ENCODE measurements at regions of chr12 and their contacts with region 1.

Region 1: GRCh38 chr12:94133964-94134795 is 14.2 kb upstream of the PLXNC1 start:
- DNase-seq: peak in 5 of 9 experiments; percentile 9 to 75 (median 39)
- ATAC-seq: peak; percentile 100
- H3K4me3 ChIP-seq: no peak overlapping the region
- H3K4me3 Mint-ChIP-seq: no peak overlapping the region
- H3K27ac ChIP-seq: no peak overlapping the region
- H3K27ac Mint-ChIP-seq: no peak overlapping the region
- H3K4me1 ChIP-seq: no peaks in the 10 kb centered on the region
- H3K4me1 Mint-ChIP-seq: peaks cover 3% of the 10 kb centered on the region
- H3K27me3 ChIP-seq: no peaks in the 10 kb centered on the region
- H3K27me3 Mint-ChIP-seq: no peaks in the 10 kb centered on the region
- CTCF ChIP-seq: peak; percentile 77

Region 2: DNA sequence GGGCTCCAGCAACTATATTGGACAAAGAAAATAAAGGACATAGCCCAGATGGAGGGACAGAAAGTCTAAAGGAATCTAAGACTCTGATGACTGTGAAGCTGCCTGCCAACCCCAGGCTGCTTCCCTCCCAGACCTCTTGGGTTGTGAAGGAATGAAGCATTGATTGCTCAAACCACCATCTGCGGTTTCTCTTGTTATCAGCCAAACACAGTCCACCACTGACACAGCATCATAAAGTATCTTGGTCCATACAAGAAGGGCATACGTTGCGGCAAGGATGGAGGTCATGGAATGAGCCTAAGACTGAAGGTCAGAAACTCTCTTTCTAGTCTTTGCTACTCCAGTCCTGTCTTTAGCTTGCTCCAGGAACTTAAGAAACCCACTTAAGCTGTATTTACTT is 44.3 kb before region 1 on chr12:
- CTCF ChIA-PET with region 1: no interaction called
- POLR2A ChIA-PET with region 1: no interaction called
- intact Hi-C with region 1: no loop called
- DNase-seq: no peak
- ATAC-seq: no peak
- H3K4me3 ChIP-seq: no peak overlapping the region
- H3K4me3 Mint-ChIP-seq: no peak overlapping the region
- H3K27ac ChIP-seq: no peak overlapping the region
- H3K27ac Mint-ChIP-seq: no peak overlapping the region
- H3K4me1 ChIP-seq: no peaks in the 10 kb centered on the region
- H3K4me1 Mint-ChIP-seq: no peaks in the 10 kb centered on the region
- H3K27me3 ChIP-seq: no peaks in the 10 kb centered on the region
- H3K27me3 Mint-ChIP-seq: no peaks in the 10 kb centered on the region
- CTCF ChIP-seq: no peak

Region 3: GRCh38 chr12:94435511-94435927 is 301.3 kb after region 1 on chr12:
- CTCF ChIA-PET with region 1: interaction called, 3 read pairs
- POLR2A ChIA-PET with region 1: no interaction called
- intact Hi-C with region 1: loop called (anchors 2 kb)
- DNase-seq: no peak
- ATAC-seq: no peak
- H3K4me3 ChIP-seq: no peak overlapping the region
- H3K4me3 Mint-ChIP-seq: no peak overlapping the region
- H3K27ac ChIP-seq: no peak overlapping the region
- H3K27ac Mint-ChIP-seq: no peak overlapping the region
- H3K4me1 ChIP-seq: peaks cover 9% of the 10 kb centered on the region
- H3K4me1 Mint-ChIP-seq: peaks cover 18% of the 10 kb centered on the region
- H3K27me3 ChIP-seq: no peaks in the 10 kb centered on the region
- H3K27me3 Mint-ChIP-seq: no peaks in the 10 kb centered on the region
- CTCF ChIP-seq: no peak

Region 4: GRCh38 chr12:94725375-94726168 is 591.4 kb after region 1 on chr12:
- CTCF ChIA-PET with region 1: no interaction called
- POLR2A ChIA-PET with region 1: no interaction called
- intact Hi-C with region 1: loop called in 1 of 2 experiments (anchors 5 kb)
- DNase-seq: peak in 2 of 9 experiments; percentile 52 to 59
- ATAC-seq: no peak
- H3K4me3 ChIP-seq: no peak overlapping the region
- H3K4me3 Mint-ChIP-seq: no peak overlapping the region
- H3K27ac ChIP-seq: no peak overlapping the region
- H3K27ac Mint-ChIP-seq: no peak overlapping the region
- H3K4me1 ChIP-seq: no peaks in the 10 kb centered on the region
- H3K4me1 Mint-ChIP-seq: no peaks in the 10 kb centered on the region
- H3K27me3 ChIP-seq: no peaks in the 10 kb centered on the region
- H3K27me3 Mint-ChIP-seq: peaks cover 12% of the 10 kb centered on the region
- CTCF ChIP-seq: no peak

Region 5: DNA sequence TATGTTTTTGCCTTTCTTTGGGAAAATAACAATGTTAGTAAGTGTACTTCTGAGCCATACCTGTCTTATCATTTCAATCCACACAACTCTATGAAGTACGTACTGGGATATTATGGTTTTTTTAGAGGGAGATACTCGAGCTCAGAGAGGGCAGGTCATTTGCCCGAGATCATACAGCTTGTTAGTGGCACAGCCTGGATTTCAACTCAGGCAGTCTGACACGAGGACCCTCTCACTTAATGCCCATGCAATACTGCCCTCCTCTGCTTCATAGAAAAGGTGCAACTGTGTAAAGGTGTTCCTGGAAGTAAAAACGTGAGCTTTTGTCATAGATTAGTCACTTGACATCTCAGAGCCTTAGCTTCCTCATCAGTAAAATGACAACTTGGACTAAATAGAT is 741.3 kb after region 1 on chr12:
- CTCF ChIA-PET with region 1: no interaction called
- POLR2A ChIA-PET with region 1: no interaction called
- intact Hi-C with region 1: loop called in 1 of 2 experiments (anchors 10 kb)
- DNase-seq: peak in 2 of 9 experiments; percentile 27 to 43
- ATAC-seq: no peak
- H3K4me3 ChIP-seq: no peak overlapping the region
- H3K4me3 Mint-ChIP-seq: no peak overlapping the region
- H3K27ac ChIP-seq: no peak overlapping the region
- H3K27ac Mint-ChIP-seq: no peak overlapping the region
- H3K4me1 ChIP-seq: peaks cover 9% of the 10 kb centered on the region
- H3K4me1 Mint-ChIP-seq: peaks cover 23% of the 10 kb centered on the region
- H3K27me3 ChIP-seq: peaks cover 15 to 26% of the 10 kb centered on the region in 2 experiments
- H3K27me3 Mint-ChIP-seq: peaks cover 71% of the 10 kb centered on the region
- CTCF ChIP-seq: no peak

Region 6: DNA sequence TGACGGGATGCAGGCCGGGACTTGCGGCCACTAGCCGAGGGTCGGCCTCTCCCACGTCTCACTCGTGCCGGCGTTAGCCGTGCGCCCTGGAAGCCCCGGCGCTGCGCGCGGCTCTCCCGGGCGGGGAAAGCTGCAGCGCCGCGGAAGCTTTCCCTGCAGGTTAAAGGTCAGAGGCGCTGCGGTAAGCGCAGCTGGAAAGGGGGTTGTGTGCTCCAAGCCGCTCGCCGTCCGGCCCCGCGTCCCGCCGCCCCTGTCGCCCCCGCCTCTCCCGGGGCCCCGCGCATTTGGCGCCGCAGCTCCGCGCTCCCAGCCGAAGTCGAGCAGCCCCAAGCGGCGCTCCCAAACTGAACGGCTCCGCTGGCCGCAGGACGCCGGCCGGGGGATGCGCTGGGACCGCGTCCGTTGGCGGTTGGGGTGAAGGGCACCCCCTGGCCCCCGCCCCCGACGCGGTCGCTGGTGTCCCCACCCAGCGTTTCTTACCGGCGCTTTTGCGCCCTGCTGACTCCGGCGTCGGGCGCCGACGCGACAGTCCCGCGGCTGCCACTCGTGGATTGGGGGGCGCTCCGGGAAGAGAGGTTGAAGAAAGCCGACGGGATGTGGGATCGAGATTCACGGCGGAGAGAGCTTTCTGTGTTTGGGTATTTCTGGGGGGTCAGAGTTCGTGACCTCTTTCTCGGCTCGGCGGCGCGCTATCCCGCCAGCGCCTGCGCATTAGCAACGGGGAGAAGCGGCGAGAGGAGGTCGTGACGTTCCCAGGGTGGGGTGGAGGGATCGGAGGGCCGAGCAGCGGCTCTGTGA is 938.9 kb after region 1 on chr12 and contains the start of gene NR2C1:
- CTCF ChIA-PET with region 1: no interaction called
- POLR2A ChIA-PET with region 1: no interaction called
- intact Hi-C with region 1: loop called in 1 of 2 experiments (anchors 10 kb)
- DNase-seq: peak; percentile 83 to 97 (median 91)
- ATAC-seq: peak; percentile 98
- H3K4me3 ChIP-seq: peak within 1 kb of the TSS; percentile 86 to 96
- H3K4me3 Mint-ChIP-seq: peak within 1 kb of the TSS; percentile 97
- H3K27ac ChIP-seq: peak within 1 kb of the TSS; percentile 71 to 74
- H3K27ac Mint-ChIP-seq: peak within 1 kb of the TSS; percentile 95
- H3K4me1 ChIP-seq: peaks cover 5% of the 10 kb centered on the region
- H3K4me1 Mint-ChIP-seq: peaks cover 26% of the 10 kb centered on the region
- H3K27me3 ChIP-seq: no peaks in the 10 kb centered on the region
- H3K27me3 Mint-ChIP-seq: no peaks in the 10 kb centered on the region
- CTCF ChIP-seq: no peak
- total RNA-seq, gene NR2C1: 40.7 to 49.2 TPM